GM12878 (cell line): ENCODE measurements at regions of chr3 and their contacts with region 1.

Region 1: DNA sequence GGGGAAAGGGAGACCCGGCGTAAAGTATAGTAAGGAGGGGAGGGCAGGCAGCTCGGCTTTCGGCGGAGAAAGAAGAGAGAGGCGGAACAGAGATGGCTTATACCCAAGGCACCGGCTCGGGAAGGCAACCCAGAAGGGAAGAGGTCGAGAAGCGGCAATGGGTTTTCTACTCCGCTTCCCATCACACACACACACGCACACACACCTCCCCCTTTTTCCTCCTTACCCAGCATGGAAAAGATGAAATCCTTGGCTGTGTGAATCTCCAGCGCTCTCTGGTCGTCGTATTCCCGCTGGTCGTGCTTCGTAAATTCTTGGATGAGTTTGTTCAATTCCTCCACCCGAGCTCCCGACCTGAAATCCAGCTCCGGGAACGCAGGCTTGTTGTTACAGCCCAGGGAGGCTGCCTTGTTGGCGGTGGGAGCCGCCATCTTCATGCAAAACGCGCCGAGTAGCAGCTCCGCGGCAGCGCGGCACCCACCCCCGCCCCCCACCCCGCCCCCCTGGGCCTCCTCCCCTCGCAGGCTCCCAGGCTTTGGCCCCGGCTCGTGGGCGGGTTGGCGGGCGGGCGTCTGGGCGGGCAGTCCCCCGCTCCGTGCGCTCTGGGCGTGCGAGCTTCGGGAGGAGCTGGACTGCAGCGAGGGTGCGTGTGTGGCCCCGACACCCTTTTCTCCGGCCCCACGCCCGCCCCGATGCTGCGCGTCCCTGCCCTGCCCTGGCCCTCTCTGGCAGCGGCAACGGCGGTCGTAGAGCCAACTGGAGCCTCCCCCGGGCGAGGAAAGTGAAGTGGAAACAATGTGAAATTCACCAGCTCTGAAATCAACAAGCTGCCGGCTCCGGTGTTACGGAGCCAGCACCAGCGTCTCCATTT is at the start of gene MB21D2:
- DNase-seq: no peak
- ATAC-seq: peak; percentile 77
- H3K4me3 ChIP-seq: peak within 1 kb of the TSS; percentile 85
- H3K27ac ChIP-seq: peak within 1 kb of the TSS; percentile 73
- H3K4me1 ChIP-seq: no peaks in the 10 kb centered on the region
- H3K27me3 ChIP-seq: no peaks in the 10 kb centered on the region
- CTCF ChIP-seq: 0 out of 6 replicates have a peak, but pooled peaks of 1 of the 3 experiments have one; percentile 0
- EP300 ChIP-seq: no peak
- POLR2A ChIP-seq: peak; percentile 83
- RAD21 ChIP-seq: 0 out of 2 replicates have a peak, but pooled peaks have one; percentile 18
- polyA plus RNA-seq, gene MB21D2: 7.9 to 21.2 TPM

Region 2: DNA sequence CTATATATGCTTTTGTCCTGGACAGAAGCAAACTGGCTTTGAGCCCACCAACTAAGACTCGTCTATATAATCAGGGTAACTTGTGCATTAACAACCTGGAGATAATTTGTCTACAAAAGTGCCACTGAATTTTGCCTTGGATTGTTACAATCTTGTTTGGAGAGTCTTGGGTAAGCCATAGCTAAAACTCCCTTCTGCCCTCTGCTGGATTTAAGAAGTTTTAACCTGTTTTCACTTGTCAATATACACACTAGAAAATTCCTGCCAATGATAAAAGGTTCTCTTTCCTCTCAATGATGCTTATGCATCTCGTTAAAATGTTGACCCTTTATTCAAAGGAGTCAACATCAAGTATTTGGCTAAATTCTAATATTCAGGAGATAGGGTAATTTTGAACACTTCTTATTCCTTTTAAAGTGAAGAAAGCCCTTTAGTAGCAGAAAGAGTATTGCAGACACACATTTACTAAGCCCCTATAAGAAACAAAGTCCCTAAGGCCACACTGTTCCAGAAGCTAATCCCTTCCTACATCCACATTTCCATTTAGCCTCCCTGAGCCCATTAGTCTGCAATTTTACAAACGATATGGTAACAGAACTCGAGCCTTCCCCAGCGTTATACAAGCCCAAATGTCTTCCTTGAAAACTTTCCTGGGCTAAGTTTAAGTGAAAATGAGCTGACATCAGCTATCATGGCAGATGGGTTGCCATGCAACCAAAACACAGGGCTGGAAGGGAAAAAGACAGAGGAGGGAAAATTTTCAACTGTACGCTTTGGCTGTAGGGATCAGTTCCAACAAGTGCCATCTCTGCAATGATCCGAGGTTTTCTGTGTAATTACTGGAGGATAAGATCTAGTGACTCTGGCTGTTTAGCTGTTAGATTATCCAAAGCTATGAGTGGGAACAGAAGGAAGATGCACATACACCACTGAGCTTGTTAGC is 114.4 kb before region 1 on chr3:
- CTCF ChIA-PET with region 1: interaction called, 9 read pairs
- POLR2A ChIA-PET with region 1: no interaction called
- RAD21 ChIA-PET with region 1: interaction called, 425 read pairs
- SMC1A ChIA-PET with region 1: interaction called, 19 read pairs
- in situ Hi-C with region 1: no loop called
- intact Hi-C with region 1: no loop called
- DNase-seq: no peak
- ATAC-seq: peak; percentile 87
- H3K4me3 ChIP-seq: no peak overlapping the region
- H3K27ac ChIP-seq: no peak overlapping the region
- H3K4me1 ChIP-seq: no peaks in the 10 kb centered on the region
- H3K27me3 ChIP-seq: no peaks in the 10 kb centered on the region
- CTCF ChIP-seq: peak; percentile 47 to 50 (median 47)
- EP300 ChIP-seq: no peak
- POLR2A ChIP-seq: no peak
- RAD21 ChIP-seq: peak; percentile 34; the same call in 1 of the 2 replicates

Region 3: GRCh38 chr3:192831111-192831644 is 86.5 kb before region 1 on chr3:
- CTCF ChIA-PET with region 1: interaction called, 27 read pairs
- POLR2A ChIA-PET with region 1: interaction called, 16 read pairs
- RAD21 ChIA-PET with region 1: interaction called, 44 read pairs
- SMC1A ChIA-PET with region 1: interaction called, 472 read pairs
- in situ Hi-C with region 1: no loop called
- intact Hi-C with region 1: loop called (anchors 5 kb)
- DNase-seq: no peak
- ATAC-seq: peak; percentile 53
- H3K4me3 ChIP-seq: peak overlapping the region; percentile 28; the same call in 1 of the 2 replicates
- H3K27ac ChIP-seq: peak overlapping the region; percentile 80
- H3K4me1 ChIP-seq: peaks cover 18% of the 10 kb centered on the region
- H3K27me3 ChIP-seq: no peaks in the 10 kb centered on the region
- CTCF ChIP-seq: no peak
- EP300 ChIP-seq: no peak
- POLR2A ChIP-seq: no peak
- RAD21 ChIP-seq: no peak

Region 4: DNA sequence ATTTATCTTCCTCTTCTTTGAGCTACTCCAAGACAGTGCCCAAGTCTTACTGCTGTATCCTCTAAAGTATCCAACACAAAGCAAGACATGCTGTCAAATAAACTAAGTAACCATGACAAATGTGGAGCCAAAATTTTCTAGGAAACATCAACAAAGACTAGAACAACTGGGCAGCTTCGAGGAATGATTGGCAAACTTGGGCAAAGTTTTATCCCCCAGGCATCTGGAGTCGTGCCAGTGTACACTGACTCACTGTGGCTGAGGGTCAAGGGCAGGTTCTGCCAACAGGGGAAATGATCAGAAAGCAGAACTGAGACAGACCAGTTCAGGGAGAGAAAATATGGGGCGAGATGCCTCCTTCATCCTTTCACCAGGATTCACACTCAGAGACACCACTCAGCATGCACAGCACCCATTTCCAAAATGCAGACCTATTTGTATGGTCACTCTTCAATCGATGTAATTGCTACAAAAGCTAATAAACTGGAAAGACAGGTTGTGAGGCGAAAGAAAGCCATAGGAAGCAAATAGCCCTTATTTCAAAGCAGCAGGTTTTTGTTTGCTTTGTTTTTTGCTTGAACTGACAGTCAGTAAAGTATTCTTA is 65.7 kb before region 1 on chr3:
- CTCF ChIA-PET with region 1: interaction called, 47 read pairs
- POLR2A ChIA-PET with region 1: interaction called, 32 read pairs
- RAD21 ChIA-PET with region 1: interaction called, 123 read pairs
- SMC1A ChIA-PET with region 1: interaction called, 108 read pairs
- in situ Hi-C with region 1: no loop called
- intact Hi-C with region 1: loop called (anchors 5 kb)
- DNase-seq: no peak
- ATAC-seq: peak; percentile 75
- H3K4me3 ChIP-seq: peak overlapping the region; percentile 18; the same call in 1 of the 2 replicates
- H3K27ac ChIP-seq: peak overlapping the region; percentile 81
- H3K4me1 ChIP-seq: peaks cover 58% of the 10 kb centered on the region
- H3K27me3 ChIP-seq: no peaks in the 10 kb centered on the region
- CTCF ChIP-seq: no peak
- EP300 ChIP-seq: peak in 1 of 2 experiments; percentile 63; a peak in 1 of 4 replicates
- POLR2A ChIP-seq: no peak
- RAD21 ChIP-seq: no peak

Region 5: DNA sequence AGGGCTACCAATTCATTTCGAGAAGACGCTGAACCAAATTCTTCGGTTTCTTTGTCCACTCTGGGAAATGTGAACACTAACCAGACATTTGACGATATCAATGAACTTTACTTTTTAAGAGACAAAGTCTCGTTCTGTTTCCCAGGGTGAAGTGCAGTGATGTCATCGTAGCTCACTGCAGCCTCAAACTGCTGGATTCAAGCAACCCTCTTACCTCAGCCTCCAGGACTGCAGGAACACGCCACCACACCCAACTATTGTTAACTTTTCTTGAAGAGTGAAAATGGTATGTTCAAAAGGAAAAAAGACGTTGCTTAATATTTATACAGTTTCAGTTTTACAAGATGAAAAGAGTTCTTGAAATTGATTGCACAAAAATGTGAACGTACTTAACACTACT is 30.6 kb before region 1 on chr3:
- CTCF ChIA-PET with region 1: interaction called, 148 read pairs
- POLR2A ChIA-PET with region 1: interaction called, 23 read pairs
- RAD21 ChIA-PET with region 1: interaction called, 146 read pairs
- SMC1A ChIA-PET with region 1: interaction called, 245 read pairs
- in situ Hi-C with region 1: no loop called
- intact Hi-C with region 1: no loop called
- DNase-seq: no peak
- ATAC-seq: no peak; the same call in 2 of the 3 replicates
- H3K4me3 ChIP-seq: no peak overlapping the region
- H3K27ac ChIP-seq: no peak overlapping the region
- H3K4me1 ChIP-seq: peaks cover 21% of the 10 kb centered on the region
- H3K27me3 ChIP-seq: no peaks in the 10 kb centered on the region
- CTCF ChIP-seq: no peak
- EP300 ChIP-seq: no peak
- POLR2A ChIP-seq: no peak
- RAD21 ChIP-seq: no peak

Region 6: GRCh38 chr3:192899540-192899982 is 18.1 kb before region 1 on chr3:
- CTCF ChIA-PET with region 1: interaction called, 148 read pairs
- POLR2A ChIA-PET with region 1: interaction called, 43 read pairs
- RAD21 ChIA-PET with region 1: interaction called, 146 read pairs
- SMC1A ChIA-PET with region 1: interaction called, 245 read pairs
- in situ Hi-C with region 1: no loop called
- intact Hi-C with region 1: loop called (anchors 2 kb)
- DNase-seq: no peak
- ATAC-seq: peak; percentile 50
- H3K4me3 ChIP-seq: no peak overlapping the region
- H3K27ac ChIP-seq: peak overlapping the region; percentile 70
- H3K4me1 ChIP-seq: peaks cover 49% of the 10 kb centered on the region
- H3K27me3 ChIP-seq: no peaks in the 10 kb centered on the region
- CTCF ChIP-seq: no peak
- EP300 ChIP-seq: no peak
- POLR2A ChIP-seq: 0 out of 2 replicates have a peak, but pooled peaks have one; percentile 2
- RAD21 ChIP-seq: no peak

Region 7: GRCh38 chr3:192929755-192930547 is 12.3 kb after region 1 on chr3:
- CTCF ChIA-PET with region 1: interaction called, 7 read pairs
- POLR2A ChIA-PET with region 1: interaction called, 11 read pairs
- RAD21 ChIA-PET with region 1: interaction called, 7 read pairs
- SMC1A ChIA-PET with region 1: interaction called, 15 read pairs
- in situ Hi-C with region 1: no loop called
- intact Hi-C with region 1: no loop called
- DNase-seq: no peak
- ATAC-seq: no peak; the same call in 2 of the 3 replicates
- H3K4me3 ChIP-seq: no peak overlapping the region
- H3K27ac ChIP-seq: no peak overlapping the region
- H3K4me1 ChIP-seq: no peaks in the 10 kb centered on the region
- H3K27me3 ChIP-seq: no peaks in the 10 kb centered on the region
- CTCF ChIP-seq: no peak
- EP300 ChIP-seq: no peak
- POLR2A ChIP-seq: no peak
- RAD21 ChIP-seq: no peak

Region 8: DNA sequence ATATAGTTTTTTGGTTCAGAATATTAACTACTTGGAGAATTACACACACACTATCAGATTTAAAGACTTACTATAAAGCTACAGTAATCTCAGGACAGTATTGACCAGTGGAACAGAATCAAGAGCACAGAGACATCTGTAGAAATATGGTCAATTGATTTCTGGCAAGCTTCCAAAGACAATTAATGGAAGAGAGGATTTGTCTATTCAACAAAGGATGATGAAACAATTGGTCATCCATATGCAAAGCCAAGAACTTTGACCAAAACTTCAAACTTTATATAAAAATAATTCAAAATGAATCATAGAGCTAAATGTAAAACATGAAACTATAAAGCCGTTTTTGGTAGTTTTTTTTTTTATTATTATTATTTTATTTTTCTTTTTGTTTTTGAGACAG is 29.8 kb after region 1 on chr3:
- CTCF ChIA-PET with region 1: no interaction called
- POLR2A ChIA-PET with region 1: no interaction called
- RAD21 ChIA-PET with region 1: no interaction called
- SMC1A ChIA-PET with region 1: no interaction called
- in situ Hi-C with region 1: no loop called
- intact Hi-C with region 1: no loop called
- DNase-seq: no peak
- ATAC-seq: no peak
- H3K4me3 ChIP-seq: no peak overlapping the region
- H3K27ac ChIP-seq: no peak overlapping the region
- H3K4me1 ChIP-seq: no peaks in the 10 kb centered on the region
- H3K27me3 ChIP-seq: no peaks in the 10 kb centered on the region
- CTCF ChIP-seq: no peak
- EP300 ChIP-seq: no peak
- POLR2A ChIP-seq: no peak
- RAD21 ChIP-seq: no peak

Region 9: DNA sequence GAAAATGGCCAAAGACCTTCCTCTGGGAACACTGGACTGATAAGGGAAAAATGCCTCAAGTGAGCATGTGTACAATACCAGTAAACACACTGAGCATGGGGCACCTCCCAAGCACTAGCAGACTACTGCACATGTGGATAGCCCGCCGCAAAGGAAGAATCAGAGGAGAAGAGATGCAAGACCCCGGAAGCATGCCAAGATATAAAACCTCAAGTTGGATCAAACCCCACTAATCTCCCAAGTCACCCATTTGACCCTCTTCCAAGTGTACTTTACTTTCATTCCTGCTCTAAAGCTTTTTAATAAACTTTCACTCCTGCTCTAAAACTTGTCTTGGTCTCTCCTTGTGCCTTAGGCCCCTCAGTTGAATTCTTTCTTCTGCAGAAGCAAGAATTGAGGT is 202.3 kb after region 1 on chr3:
- CTCF ChIA-PET with region 1: no interaction called
- POLR2A ChIA-PET with region 1: no interaction called
- RAD21 ChIA-PET with region 1: no interaction called
- SMC1A ChIA-PET with region 1: no interaction called
- in situ Hi-C with region 1: no loop called
- intact Hi-C with region 1: no loop called
- DNase-seq: no peak
- ATAC-seq: no peak
- H3K4me3 ChIP-seq: no peak overlapping the region
- H3K27ac ChIP-seq: no peak overlapping the region
- H3K4me1 ChIP-seq: no peaks in the 10 kb centered on the region
- H3K27me3 ChIP-seq: peaks cover 0 to 3% of the 10 kb centered on the region in 2 experiments; a peak in 2 of 4 replicates
- CTCF ChIP-seq: no peak
- EP300 ChIP-seq: no peak
- POLR2A ChIP-seq: no peak
- RAD21 ChIP-seq: no peak

Region 10: GRCh38 chr3:193134844-193135243 is 217.2 kb after region 1 on chr3:
- CTCF ChIA-PET with region 1: no interaction called
- POLR2A ChIA-PET with region 1: no interaction called
- RAD21 ChIA-PET with region 1: no interaction called
- SMC1A ChIA-PET with region 1: no interaction called
- in situ Hi-C with region 1: no loop called
- intact Hi-C with region 1: no loop called
- DNase-seq: no peak
- ATAC-seq: no peak
- H3K4me3 ChIP-seq: no peak overlapping the region
- H3K27ac ChIP-seq: no peak overlapping the region
- H3K4me1 ChIP-seq: no peaks in the 10 kb centered on the region
- H3K27me3 ChIP-seq: peaks cover 3 to 4% of the 10 kb centered on the region in 2 experiments; a peak in 3 of 4 replicates
- CTCF ChIP-seq: no peak
- EP300 ChIP-seq: no peak
- POLR2A ChIP-seq: no peak
- RAD21 ChIP-seq: no peak